Common myeloid progenitor, CD34-positive (primary cell): ENCODE measurements at regions of chr20 and their contacts with region 1.

Region 1: DNA sequence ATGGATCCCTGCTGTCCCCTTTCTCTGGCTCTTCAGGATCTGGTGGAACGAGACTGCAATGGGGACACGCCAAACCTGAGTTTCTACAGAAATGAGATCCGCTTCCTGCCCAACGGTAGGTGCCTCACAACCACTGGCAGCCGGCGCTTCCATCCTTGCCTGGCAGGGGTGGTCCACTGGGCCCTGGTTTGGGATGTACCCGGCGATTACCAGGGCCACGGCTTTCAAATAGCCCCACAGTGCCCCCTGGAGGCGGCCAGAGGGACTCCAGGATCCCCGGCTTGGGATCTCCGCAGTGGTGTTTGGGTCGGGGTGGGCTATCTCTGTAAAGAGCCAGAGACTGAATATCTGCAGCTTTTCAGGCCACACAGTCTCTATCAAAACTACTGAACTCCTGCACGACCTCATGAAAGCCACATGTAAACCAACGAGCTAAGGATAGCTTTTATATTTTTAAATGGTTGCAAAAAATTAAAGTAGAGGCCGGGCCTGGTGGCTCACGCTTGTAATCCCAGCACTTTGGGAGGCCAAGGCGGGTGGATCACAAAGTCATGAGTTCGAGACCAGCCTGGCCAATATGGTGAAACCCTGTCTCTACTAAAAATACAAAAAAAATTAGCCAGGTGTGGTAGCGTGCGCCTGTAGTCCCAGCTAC is 3.7 kb downstream of the OGFR start:
- DNase-seq: peak; percentile 59 to 72 (median 66)
- H3K4me3 ChIP-seq: no peak overlapping the region
- H3K27ac ChIP-seq: no peak overlapping the region
- H3K4me1 ChIP-seq: peaks cover 0 to 27% (median 22%) of the 10 kb centered on the region in 4 experiments
- H3K27me3 ChIP-seq: no peaks in the 10 kb centered on the region

Region 2: GRCh38 chr20:62796699-62797491 is 11.4 kb before region 1 on chr20:
- CTCF ChIA-PET with region 1: interaction called, 13 read pairs
- POLR2A ChIA-PET with region 1: no interaction called
- DNase-seq: no peak
- H3K4me3 ChIP-seq: peak overlapping the region in 6 of 7 experiments; percentile 61 to 88 (median 74)
- H3K27ac ChIP-seq: peak overlapping the region in 1 of 2 experiments; percentile 54
- H3K4me1 ChIP-seq: peaks cover 0 to 34% (median 32%) of the 10 kb centered on the region in 4 experiments
- H3K27me3 ChIP-seq: no peaks in the 10 kb centered on the region